ENCODE measurements at regions of chr11 and their contacts with region 1.

Region 1: DNA sequence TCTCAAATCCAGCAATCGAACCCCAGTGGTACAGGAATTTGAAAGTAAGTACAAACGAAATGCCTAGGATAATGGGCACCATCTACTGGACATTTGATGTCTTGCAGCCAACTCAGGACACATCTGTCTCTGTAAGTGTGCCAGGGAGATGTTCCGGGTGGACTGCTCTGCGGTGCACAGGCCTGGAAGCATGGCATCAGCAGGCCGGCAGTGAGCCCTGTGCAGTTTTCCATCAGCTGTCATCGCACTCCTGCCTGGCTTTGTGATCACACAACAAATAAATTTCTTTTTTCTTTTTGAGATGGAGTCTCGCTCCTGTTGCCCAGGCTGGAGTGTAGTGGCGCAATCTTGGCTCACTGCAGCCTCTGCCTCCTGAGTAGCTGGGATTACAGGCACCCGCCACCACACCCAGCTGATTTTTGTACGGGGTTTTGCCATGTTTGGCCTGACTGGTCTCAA is 71.0 kb downstream of the JAM3 start:
- DNase-seq: peak; percentile 68
- H3K4me3 ChIP-seq: no peak overlapping the region
- H3K27ac ChIP-seq: no peak overlapping the region
- H3K4me1 ChIP-seq: peaks cover 0 to 8% (median 6%) of the 10 kb centered on the region in 6 donors
- H3K27me3 ChIP-seq: no peaks in the 10 kb centered on the region
- CTCF ChIP-seq: peak; percentile 56 to 92 (median 77)
- POLR2A ChIP-seq: no peak

Region 2: DNA sequence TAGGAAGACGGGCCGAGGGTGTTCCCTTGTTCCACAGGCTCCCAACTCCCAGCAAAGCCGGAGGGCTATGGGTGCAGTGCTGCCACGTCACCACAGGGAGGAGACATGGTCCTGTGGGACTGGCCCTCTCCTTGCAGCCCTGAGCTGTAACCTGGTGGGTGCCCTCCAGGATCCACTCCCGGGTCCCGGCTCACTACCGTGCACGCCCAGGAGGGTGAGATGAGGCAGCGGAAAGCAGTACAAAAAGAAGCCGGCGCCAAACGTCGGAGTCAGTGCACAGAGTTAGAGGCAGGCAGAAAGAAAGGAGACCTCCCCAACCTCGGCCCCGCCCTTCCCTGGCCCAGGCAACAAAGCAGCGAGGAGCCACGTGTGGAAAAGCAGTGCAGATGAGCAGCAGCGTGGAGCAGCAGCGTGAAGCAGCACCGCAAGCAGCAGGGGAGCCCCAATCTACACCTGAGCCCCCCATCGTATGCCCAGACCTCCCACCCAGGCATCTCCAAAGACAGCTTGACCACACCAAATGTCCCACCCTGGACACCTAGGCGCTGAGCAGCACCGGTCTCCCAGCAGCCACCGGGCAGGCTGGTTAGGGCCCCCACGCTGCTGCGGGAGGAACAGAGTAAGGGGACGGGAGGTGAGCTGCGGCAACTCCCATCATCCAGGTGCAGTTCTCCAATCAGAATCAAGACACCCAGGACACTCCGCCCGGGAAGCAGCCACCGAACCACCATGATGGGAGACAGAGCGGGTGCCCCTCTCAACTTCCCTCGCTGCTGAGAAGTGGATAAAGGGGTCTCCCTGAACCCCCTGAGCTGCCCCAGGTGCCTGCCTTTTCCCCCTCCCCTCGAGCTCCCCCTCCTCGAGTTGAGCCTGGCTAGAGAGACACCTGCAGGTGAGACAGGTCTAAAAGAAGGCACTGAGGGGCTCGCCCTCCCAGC is 211.9 kb before region 1 on chr11:
- intact Hi-C with region 1: loop called (anchors 10 kb)
- DNase-seq: peak; percentile 83
- H3K4me3 ChIP-seq: peak overlapping the region in 1 of 8 donors; percentile 46
- H3K27ac ChIP-seq: no peak overlapping the region
- H3K4me1 ChIP-seq: peaks cover 5 to 19% (median 14%) of the 10 kb centered on the region in 6 donors
- H3K27me3 ChIP-seq: peaks cover 0 to 18% (median 0%) of the 10 kb centered on the region in 7 donors
- CTCF ChIP-seq: peak; percentile 61 to 88 (median 76)
- POLR2A ChIP-seq: no peak

Region 3: GRCh38 chr11:134050541-134051383 is 89.1 kb before region 1 on chr11:
- intact Hi-C with region 1: loop called (anchors 2 kb)
- DNase-seq: peak; percentile 92
- H3K4me3 ChIP-seq: peak overlapping the region in 6 of 8 donors; percentile 4 to 58 (median 27)
- H3K27ac ChIP-seq: peak overlapping the region in 5 of 8 donors; percentile 55 to 79 (median 75)
- H3K4me1 ChIP-seq: peaks cover 0 to 32% (median 15%) of the 10 kb centered on the region in 6 donors
- H3K27me3 ChIP-seq: peaks cover 0 to 55% (median 4%) of the 10 kb centered on the region in 7 donors
- CTCF ChIP-seq: peak; percentile 87 to 97 (median 91)
- POLR2A ChIP-seq: no peak

Measured in spleen (tissue), 13 donors.